Activated T-helper 2 cell treated with anti-CD3 and anti-CD28 coated beads, Interferon-gamma antibody, Interleukin-2, Interleukin-4, amounts not matched to agents 10 μg/mL and 5 μg/mL and 100 μg/mL, durations not matched to agents 14 hours and 24 hours and 36 hours (primary cell): ENCODE measurements at regions of chr21 and their contacts with region 1.

Region 1: DNA sequence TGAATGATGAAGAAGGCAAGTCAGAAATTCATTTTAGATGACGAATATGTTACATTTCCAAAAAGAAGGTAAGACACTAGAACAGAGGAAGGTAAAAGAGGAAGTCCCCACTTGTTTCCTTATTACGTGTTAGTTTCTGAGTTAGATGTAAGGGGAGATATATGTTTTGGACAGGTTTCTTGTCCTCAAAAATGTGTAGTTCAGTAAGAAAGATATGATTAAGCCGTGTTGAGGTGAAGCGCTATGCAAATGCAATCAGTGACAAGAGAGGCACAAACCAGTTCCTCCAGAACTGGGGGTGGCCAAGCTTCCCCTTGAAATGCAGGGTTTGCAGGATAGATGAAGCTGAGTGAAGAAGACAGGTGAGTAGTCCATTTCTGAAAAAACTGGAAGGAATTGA is 293.3 kb upstream of the RUNX1 start:
- DNase-seq: no peak
- H3K4me3 Mint-ChIP-seq: peak overlapping the region; percentile 69
- H3K27ac Mint-ChIP-seq: peak overlapping the region; percentile 98
- H3K4me1 Mint-ChIP-seq: peaks cover 63% of the 10 kb centered on the region
- H3K27me3 Mint-ChIP-seq: no peaks in the 10 kb centered on the region

Region 2: GRCh38 chr21:34967509-34968289 is 374.7 kb before region 1 on chr21:
- intact Hi-C with region 1: loop called (anchors 1 kb)
- DNase-seq: peak; percentile 41
- H3K4me3 Mint-ChIP-seq: peak overlapping the region; percentile 69
- H3K27ac Mint-ChIP-seq: peak overlapping the region; percentile 99
- H3K4me1 Mint-ChIP-seq: peaks cover 82% of the 10 kb centered on the region
- H3K27me3 Mint-ChIP-seq: no peaks in the 10 kb centered on the region

Region 3: DNA sequence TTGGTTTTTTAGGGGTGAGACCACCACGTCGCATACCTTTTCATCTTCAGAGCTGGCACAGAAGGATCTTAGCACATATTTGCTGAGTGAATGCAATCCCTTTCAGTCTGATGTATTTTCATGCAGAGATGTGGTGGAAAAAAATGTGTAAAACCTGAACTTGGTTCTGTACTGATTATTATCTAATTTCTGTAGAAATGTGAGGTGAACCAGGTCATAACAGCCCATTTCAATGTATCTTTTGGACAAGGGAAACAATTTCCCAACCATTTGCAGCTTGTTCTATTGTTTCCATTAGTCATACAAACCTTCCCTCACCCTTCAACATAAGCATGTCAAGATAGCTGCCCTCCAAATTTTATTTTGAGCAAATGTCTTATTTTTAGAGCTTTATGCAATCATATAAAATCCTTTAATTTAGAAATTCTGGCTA is 246.6 kb before region 1 on chr21:
- intact Hi-C with region 1: loop called (anchors 1 kb)
- DNase-seq: no peak
- H3K4me3 Mint-ChIP-seq: no peak overlapping the region
- H3K27ac Mint-ChIP-seq: peak overlapping the region; percentile 93
- H3K4me1 Mint-ChIP-seq: peaks cover 65% of the 10 kb centered on the region
- H3K27me3 Mint-ChIP-seq: no peaks in the 10 kb centered on the region

Region 4: GRCh38 chr21:35150562-35151226 is 191.7 kb before region 1 on chr21:
- intact Hi-C with region 1: loop called (anchors 5 kb)
- DNase-seq: no peak
- H3K4me3 Mint-ChIP-seq: no peak overlapping the region
- H3K27ac Mint-ChIP-seq: peak overlapping the region; percentile 88
- H3K4me1 Mint-ChIP-seq: peaks cover 52% of the 10 kb centered on the region
- H3K27me3 Mint-ChIP-seq: no peaks in the 10 kb centered on the region

Region 5: GRCh38 chr21:35252831-35253230 is 89.6 kb before region 1 on chr21:
- intact Hi-C with region 1: loop called (anchors 2 kb)
- DNase-seq: no peak
- H3K4me3 Mint-ChIP-seq: no peak overlapping the region
- H3K27ac Mint-ChIP-seq: no peak overlapping the region
- H3K4me1 Mint-ChIP-seq: peaks cover 18% of the 10 kb centered on the region
- H3K27me3 Mint-ChIP-seq: no peaks in the 10 kb centered on the region

Region 6: GRCh38 chr21:35400233-35400957 is 58.0 kb after region 1 on chr21:
- intact Hi-C with region 1: loop called (anchors 2 kb)
- DNase-seq: peak; percentile 20
- H3K4me3 Mint-ChIP-seq: peak overlapping the region; percentile 15
- H3K27ac Mint-ChIP-seq: peak overlapping the region; percentile 48
- H3K4me1 Mint-ChIP-seq: peaks cover 26% of the 10 kb centered on the region
- H3K27me3 Mint-ChIP-seq: no peaks in the 10 kb centered on the region